Activated naive CD4-positive, alpha-beta T cell treated with anti-CD3 and anti-CD28 coated beads for 36 hours (primary cell): ENCODE measurements at regions of chr6 and their contacts with region 1.

Region 1: GRCh38 chr6:26322645-26323482 is 42.1 kb upstream of the BTN3A2 start:
- DNase-seq: peak; percentile 74
- H3K4me3 Mint-ChIP-seq: peak overlapping the region; percentile 83
- H3K27ac Mint-ChIP-seq: peak overlapping the region; percentile 89
- H3K4me1 Mint-ChIP-seq: peaks cover 30% of the 10 kb centered on the region
- H3K27me3 Mint-ChIP-seq: peaks cover 30% of the 10 kb centered on the region

Region 2: GRCh38 chr6:26312501-26313390 is 10.1 kb before region 1 on chr6:
- CTCF ChIA-PET with region 1: no interaction called
- intact Hi-C with region 1: loop called (anchors 1 kb)
- DNase-seq: peak; percentile 95
- H3K4me3 Mint-ChIP-seq: peak overlapping the region; percentile 81
- H3K27ac Mint-ChIP-seq: peak overlapping the region; percentile 83
- H3K4me1 Mint-ChIP-seq: peaks cover 28% of the 10 kb centered on the region
- H3K27me3 Mint-ChIP-seq: no peaks in the 10 kb centered on the region

Region 3: DNA sequence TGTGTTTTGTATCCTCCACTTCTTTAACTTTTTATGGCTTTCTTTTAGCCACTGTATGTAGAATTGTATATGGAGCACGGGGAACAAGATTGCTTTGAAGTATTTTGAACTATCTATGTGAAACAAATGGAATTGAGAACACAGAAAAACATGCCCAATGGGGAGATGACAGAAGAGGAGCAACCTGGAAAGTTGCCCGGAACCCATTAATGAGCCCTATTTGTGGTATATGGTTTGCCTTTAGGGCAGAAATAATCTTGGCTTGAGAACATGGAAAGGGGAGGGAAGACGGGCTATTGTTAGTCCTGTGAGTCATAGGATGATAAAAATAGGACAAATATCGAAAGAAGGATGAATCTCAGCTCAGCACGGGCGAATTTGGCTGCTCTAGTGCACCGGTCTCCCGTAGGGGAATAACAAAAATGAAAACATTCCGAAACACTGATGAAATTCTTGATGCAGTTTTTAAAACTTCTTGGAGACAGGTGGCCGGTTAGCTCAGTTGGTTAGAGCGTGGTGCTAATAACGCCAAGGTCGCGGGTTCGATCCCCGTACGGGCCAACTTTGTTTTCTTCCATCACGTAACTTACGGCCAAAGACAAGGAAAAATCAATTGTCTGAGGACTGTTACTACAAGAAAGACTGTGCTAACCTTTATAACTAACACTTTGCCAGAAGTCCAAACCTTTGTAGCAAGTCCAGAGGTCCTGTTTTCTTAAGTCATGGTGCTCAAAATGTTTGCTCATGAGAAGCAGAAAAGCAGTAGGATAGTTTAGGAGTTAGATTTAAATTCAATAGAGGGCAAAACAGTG is 231.0 kb after region 1 on chr6:
- CTCF ChIA-PET with region 1: no interaction called
- intact Hi-C with region 1: loop called (anchors 1 kb)
- DNase-seq: peak; percentile 91
- H3K4me3 Mint-ChIP-seq: no peak overlapping the region
- H3K27ac Mint-ChIP-seq: no peak overlapping the region
- H3K4me1 Mint-ChIP-seq: peaks cover 26% of the 10 kb centered on the region
- H3K27me3 Mint-ChIP-seq: no peaks in the 10 kb centered on the region

Region 4: GRCh38 chr6:27091661-27092646 is 769.1 kb after region 1 on chr6:
- CTCF ChIA-PET with region 1: no interaction called
- intact Hi-C with region 1: loop called (anchors 10 kb)
- DNase-seq: peak; percentile 48
- H3K4me3 Mint-ChIP-seq: peak overlapping the region; percentile 78
- H3K27ac Mint-ChIP-seq: peak overlapping the region; percentile 46
- H3K4me1 Mint-ChIP-seq: peaks cover 13% of the 10 kb centered on the region
- H3K27me3 Mint-ChIP-seq: peaks cover 53% of the 10 kb centered on the region